Sciatic nerve (tissue), 2 donors: ENCODE measurements at regions of chr2 and their contacts with region 1.

Region 1: GRCh38 chr2:201363857-201364560 is 6.9 kb upstream of the FLACC1 start:
- DNase-seq: no peak
- ATAC-seq: peak; percentile 61

Region 2: DNA sequence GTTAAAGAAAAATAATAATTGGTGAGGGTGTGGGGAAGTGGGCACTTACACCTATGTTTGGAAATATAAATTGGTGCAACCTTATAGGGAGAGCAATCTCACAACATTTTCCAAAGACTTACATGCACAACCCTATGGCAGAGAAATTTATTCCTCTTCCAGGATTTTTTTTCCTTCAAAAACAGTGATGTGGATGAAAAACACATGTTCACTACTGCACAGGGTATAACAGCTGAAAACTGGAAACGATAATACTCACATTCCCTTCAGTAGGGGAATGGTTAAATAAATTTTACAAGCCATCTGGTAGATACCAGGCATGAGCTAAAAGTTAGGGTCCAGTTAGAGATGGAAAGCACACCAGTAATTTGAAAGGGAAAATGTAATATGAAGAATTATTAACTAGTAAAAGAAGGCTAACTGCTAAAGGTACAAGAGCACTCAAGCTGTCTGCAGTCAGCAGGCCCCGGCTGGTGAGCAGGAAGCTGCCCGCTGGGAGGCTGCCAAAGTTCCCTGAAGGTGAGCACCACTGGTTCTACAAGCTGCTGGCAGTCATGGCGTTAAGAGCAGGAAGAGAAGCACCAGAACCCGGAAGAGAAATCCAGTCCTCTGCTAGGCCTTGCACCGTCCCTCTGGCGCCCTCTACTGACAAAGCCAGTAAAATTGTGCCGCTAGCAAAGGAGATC is 132.1 kb before region 1 on chr2:
- intact Hi-C with region 1: loop called (anchors 10 kb)
- DNase-seq: peak; percentile 86
- ATAC-seq: peak; percentile 75